Colonic mucosa (tissue), 4 donors: ENCODE measurements at regions of chrX and their contacts with region 1.

Region 1: GRCh38 chrX:140071037-140071436 is 105.7 kb upstream of the CXorf66 start:
- DNase-seq: no peak
- H3K4me3 ChIP-seq: no peak overlapping the region
- H3K27ac ChIP-seq: no peak overlapping the region
- H3K4me1 ChIP-seq: no peaks in the 10 kb centered on the region
- H3K27me3 ChIP-seq: no peaks in the 10 kb centered on the region
- CTCF ChIP-seq: no peak

Region 2: GRCh38 chrX:139862217-139862616 is 208.8 kb before region 1 on chrX:
- intact Hi-C with region 1: no loop called
- DNase-seq: no peak
- H3K4me3 ChIP-seq: no peak overlapping the region
- H3K27ac ChIP-seq: no peak overlapping the region
- H3K4me1 ChIP-seq: no peaks in the 10 kb centered on the region
- H3K27me3 ChIP-seq: no peaks in the 10 kb centered on the region
- CTCF ChIP-seq: no peak

Region 3: GRCh38 chrX:140141444-140142029 is 70.5 kb after region 1 on chrX:
- intact Hi-C with region 1: loop called (anchors 5 kb)
- DNase-seq: peak; percentile 26
- H3K4me3 ChIP-seq: no peak overlapping the region
- H3K27ac ChIP-seq: no peak overlapping the region
- H3K4me1 ChIP-seq: no peaks in the 10 kb centered on the region
- H3K27me3 ChIP-seq: no peaks in the 10 kb centered on the region
- CTCF ChIP-seq: peak; percentile 51

Region 4: DNA sequence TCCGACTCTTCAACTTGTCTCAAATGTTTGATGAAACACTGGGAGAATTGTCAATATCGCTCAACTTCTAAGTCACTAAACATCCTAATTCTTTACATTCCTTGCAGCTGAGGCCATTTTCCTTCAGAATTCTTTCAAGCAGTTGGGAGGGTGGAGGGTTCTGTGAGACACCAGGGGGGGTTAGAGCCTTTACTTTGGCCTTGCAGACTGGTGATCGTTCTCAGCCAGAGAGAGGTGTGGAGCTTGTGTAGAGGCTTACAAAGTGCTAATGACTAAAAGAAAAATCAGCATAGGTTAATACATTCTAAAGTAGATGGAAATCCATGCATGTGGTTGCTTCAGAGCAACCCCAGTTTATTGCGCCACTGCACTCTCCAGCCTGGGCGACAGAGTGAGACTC is 455.1 kb after region 1 on chrX:
- intact Hi-C with region 1: no loop called
- DNase-seq: no peak
- H3K4me3 ChIP-seq: no peak overlapping the region
- H3K27ac ChIP-seq: no peak overlapping the region
- H3K4me1 ChIP-seq: no peaks in the 10 kb centered on the region
- H3K27me3 ChIP-seq: no peaks in the 10 kb centered on the region
- CTCF ChIP-seq: no peak